ENCODE measurements at regions of chr4 and their contacts with region 1.

Region 1: DNA sequence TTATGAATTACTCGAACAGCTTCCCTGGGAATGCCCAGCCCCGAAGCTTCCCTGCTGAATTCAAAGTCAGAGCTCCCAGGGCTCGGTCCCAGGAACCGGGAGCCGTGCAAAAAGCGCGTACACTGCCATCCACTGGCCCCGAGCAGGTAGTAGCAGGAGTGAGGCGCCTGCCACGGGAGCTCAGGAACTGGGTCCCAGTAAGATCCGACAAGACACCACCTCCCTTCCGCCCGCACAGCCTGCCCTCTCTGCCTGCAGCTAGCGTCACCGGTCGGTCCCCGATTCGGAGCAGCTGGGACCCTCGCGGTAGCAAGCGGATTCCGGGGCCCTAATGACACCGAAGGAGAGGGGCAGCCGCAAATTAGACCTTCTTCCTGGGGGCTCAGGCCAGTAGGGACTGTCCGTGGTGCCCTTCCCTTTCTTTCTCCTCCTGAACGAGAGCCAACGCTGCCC is 1.2 kb downstream of the CORIN start:
- DNase-seq: peak; percentile 90 to 94 (median 92)
- H3K4me3 ChIP-seq: peak overlapping the region; percentile 60 to 78 (median 74)
- H3K27ac ChIP-seq: no peak overlapping the region
- H3K4me1 ChIP-seq: peaks cover 0 to 12% (median 0%) of the 10 kb centered on the region in 3 donors
- H3K27me3 ChIP-seq: no peaks in the 10 kb centered on the region
- CTCF ChIP-seq: peak; percentile 65

Region 2: DNA sequence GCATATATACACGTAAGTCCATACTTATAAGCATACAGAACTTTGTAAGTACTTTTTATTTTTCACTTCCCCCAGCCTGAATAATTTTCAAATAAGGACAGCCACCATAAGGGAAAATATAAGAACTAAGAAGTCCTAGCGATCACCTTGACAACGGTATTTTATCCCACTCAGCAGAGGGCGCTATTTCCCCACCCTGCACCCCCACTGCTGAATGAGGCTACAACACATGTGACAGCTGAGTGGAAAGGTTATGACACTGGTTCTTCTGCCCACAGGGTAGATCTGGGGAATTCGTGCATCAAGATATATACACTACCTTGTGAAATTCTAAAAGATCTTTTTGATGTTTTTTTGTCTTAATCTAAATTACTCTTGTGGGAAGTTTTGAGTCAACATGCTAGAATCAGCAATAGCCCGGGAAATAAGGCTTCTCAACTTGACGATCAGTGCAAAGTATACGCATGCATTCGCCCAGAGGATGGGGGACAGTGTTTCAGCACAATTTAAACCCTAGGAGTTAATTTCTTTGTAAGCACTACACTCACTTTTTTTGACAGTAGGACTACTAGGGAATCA is 150.3 kb before region 1 on chr4:
- intact Hi-C with region 1: loop called (anchors 10 kb)
- DNase-seq: peak in 4 of 5 donors; percentile 42 to 66 (median 52)
- H3K4me3 ChIP-seq: no peak overlapping the region
- H3K27ac ChIP-seq: no peak overlapping the region
- H3K4me1 ChIP-seq: no peaks in the 10 kb centered on the region
- H3K27me3 ChIP-seq: no peaks in the 10 kb centered on the region
- CTCF ChIP-seq: peak; percentile 76

Measured in kidney (tissue), 22 donors.